B cell (primary cell): ENCODE measurements at regions of chr14 and their contacts with region 1.

Region 1: DNA sequence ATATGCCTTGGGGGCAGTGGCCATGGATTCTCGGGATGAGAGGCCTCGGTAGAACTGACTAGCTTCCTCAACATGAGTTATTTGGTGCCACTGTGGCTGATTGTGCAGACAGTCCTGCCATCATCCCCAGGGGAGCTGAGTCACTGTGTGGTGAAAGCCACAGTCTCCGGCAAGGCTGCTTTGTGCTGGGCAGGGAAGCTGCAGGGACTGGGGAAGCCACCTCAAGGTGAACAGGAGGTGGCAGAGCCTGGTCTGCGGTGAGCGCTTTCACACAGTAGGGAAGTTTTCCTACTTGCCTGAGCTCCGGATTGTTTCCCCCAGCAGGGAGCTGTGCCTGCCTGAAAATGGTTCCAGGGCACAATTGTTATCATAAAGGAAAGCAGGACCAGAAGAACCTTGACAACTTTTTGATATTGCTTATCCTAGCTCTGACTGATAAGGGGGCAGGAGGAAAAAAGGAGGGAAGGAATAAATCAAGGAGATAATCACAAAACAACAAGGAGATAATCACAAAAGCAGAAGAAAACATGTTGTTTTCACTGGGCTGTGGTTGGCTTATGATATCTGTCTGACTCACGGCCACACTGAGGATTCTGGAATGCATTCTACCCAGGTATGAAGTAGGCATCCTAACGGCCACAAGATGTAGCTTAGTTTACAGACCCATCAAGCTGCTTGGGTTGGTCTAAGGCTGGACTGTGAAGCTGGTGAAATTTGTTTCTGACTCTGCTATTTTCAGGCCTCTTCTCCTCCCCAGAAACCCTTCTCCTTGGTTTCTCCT is 32.2 kb upstream of the GNG2 start:
- DNase-seq: peak; percentile 75
- ATAC-seq: peak; percentile 100
- H3K4me3 ChIP-seq: no peak overlapping the region
- H3K4me3 Mint-ChIP-seq: peak overlapping the region; percentile 20
- H3K27ac ChIP-seq: no peak overlapping the region
- H3K27ac Mint-ChIP-seq: peak overlapping the region; percentile 4
- H3K4me1 ChIP-seq: peaks cover 11 to 13% of the 10 kb centered on the region in 2 donors
- H3K4me1 Mint-ChIP-seq: no peaks in the 10 kb centered on the region
- H3K27me3 ChIP-seq: peaks cover 0 to 7% (median 2%) of the 10 kb centered on the region in 4 experiments
- H3K27me3 Mint-ChIP-seq: no peaks in the 10 kb centered on the region
- CTCF ChIP-seq: no peak

Region 2: GRCh38 chr14:51780006-51780692 is 48.1 kb before region 1 on chr14:
- CTCF ChIA-PET with region 1: interaction called, 6 read pairs
- POLR2A ChIA-PET with region 1: no interaction called
- intact Hi-C with region 1: loop called (anchors 1 kb)
- DNase-seq: peak; percentile 80
- ATAC-seq: peak; percentile 80
- H3K4me3 ChIP-seq: no peak overlapping the region
- H3K4me3 Mint-ChIP-seq: no peak overlapping the region
- H3K27ac ChIP-seq: no peak overlapping the region
- H3K27ac Mint-ChIP-seq: no peak overlapping the region
- H3K4me1 ChIP-seq: peaks cover 7 to 11% of the 10 kb centered on the region in 2 donors
- H3K4me1 Mint-ChIP-seq: peaks cover 10% of the 10 kb centered on the region
- H3K27me3 ChIP-seq: peaks cover 0 to 16% (median 4%) of the 10 kb centered on the region in 4 experiments
- H3K27me3 Mint-ChIP-seq: peaks cover 32% of the 10 kb centered on the region
- CTCF ChIP-seq: peak; percentile 90